MCF 10A (cell line): ENCODE measurements at regions of chr18 and their contacts with region 1.

Region 1: DNA sequence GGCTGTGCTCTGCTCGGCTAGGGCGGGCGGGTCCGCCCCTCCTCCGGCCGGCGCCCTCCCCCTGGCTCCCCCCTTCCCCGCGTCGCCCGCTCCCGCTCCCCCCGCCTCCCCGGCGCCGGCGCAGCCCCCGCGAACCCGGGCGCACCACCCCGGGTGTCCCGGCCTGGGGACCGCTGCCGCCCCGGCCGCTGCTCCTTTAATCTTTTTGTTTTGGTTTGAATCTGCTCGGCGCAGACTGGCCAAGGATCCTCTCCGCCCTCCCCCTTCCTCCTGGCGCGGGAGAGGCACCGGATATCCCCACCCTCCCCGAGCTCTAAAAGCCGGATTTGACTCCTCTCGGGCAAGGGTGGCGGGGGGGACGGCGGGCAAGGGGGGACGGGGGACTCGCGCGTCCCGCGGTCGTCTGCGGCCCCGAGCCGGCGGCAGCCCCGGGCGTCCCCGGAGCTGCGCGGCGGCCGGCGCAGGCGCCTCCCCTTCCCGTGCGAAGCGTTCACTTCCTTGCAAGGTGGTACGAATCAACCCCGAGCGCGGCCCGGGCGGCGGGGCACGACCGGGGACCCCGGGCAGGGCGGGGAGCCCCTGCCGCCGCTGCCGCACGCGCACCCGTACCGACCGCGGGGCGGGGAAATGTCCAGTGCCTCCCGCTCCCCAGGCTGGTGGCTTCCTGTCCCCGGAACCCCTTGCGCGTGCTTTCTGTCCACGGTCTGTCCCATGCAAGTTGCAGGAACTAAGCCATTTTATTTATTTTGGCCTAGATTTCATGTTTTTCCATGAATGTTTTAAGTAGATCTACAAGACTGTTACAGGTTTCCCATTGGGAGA is at the start of gene PTGR3:
- DNase-seq: peak; percentile 90
- H3K4me3 Mint-ChIP-seq: peak within 1 kb of the TSS; percentile 98
- H3K27ac Mint-ChIP-seq: peak within 1 kb of the TSS; percentile 92
- H3K4me1 Mint-ChIP-seq: peaks cover 40% of the 10 kb centered on the region
- H3K27me3 Mint-ChIP-seq: no peaks in the 10 kb centered on the region
- CTCF ChIP-seq: no peak
- total RNA-seq, gene PTGR3: 19.8 and 20.6 TPM in 2 replicates

Region 2: GRCh38 chr18:74652392-74652988 is 556.9 kb before region 1 on chr18:
- CTCF ChIA-PET with region 1: no interaction called
- POLR2A ChIA-PET with region 1: no interaction called
- intact Hi-C with region 1: loop called (anchors 1 kb)
- DNase-seq: peak; percentile 54
- H3K4me3 Mint-ChIP-seq: no peak overlapping the region
- H3K27ac Mint-ChIP-seq: no peak overlapping the region
- H3K4me1 Mint-ChIP-seq: no peaks in the 10 kb centered on the region
- H3K27me3 Mint-ChIP-seq: no peaks in the 10 kb centered on the region
- CTCF ChIP-seq: peak; percentile 38

Region 3: DNA sequence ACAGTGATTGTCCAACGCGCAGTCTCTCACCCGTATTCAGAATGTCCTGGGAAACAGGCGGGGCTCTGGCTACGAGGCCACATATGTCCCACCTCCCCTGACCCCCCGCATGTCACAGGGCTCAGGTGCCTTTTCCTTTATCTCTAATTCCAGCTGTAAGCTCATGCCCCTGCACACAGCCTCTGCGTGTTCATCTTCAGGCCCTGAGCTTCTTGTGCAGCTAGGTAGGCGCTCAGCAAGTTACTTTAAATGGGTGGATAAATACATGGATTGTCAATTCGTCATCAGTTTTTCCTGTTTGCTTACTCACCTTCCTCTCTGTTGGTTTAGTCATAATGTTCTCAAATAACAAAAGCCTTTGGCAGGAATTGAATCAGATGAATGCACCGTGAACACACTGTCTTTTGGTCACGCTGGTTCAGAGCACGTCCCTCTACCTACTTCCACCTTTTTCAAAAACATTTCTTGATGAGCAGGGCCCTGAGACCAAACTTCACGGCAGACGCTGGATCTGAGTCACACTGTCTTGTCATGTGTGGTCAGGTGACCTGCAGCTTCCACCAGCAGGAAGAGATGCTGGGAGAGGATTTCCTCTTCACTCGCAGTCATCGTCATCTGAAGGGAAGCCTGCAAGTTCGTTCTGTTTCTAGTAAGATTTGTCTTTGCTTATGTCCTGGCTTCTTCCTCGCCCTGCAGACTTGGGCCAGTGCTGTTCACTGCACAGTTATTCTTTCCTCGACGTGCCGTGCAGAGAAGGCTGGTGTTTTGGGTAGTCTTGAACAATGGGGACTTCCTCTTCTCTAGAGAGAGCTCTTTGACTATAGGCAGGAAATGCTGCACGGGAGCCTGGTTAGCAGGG is 138.5 kb before region 1 on chr18:
- CTCF ChIA-PET with region 1: no interaction called
- POLR2A ChIA-PET with region 1: interaction called, 4 read pairs
- intact Hi-C with region 1: loop called (anchors 5 kb)
- DNase-seq: peak; percentile 86
- H3K4me3 Mint-ChIP-seq: peak overlapping the region; percentile 59
- H3K27ac Mint-ChIP-seq: peak overlapping the region; percentile 93
- H3K4me1 Mint-ChIP-seq: peaks cover 11% of the 10 kb centered on the region
- H3K27me3 Mint-ChIP-seq: no peaks in the 10 kb centered on the region
- CTCF ChIP-seq: no peak

Region 4: GRCh38 chr18:75247611-75248421 is 38.5 kb after region 1 on chr18:
- CTCF ChIA-PET with region 1: interaction called, 6 read pairs
- POLR2A ChIA-PET with region 1: interaction called, 24 read pairs
- intact Hi-C with region 1: loop called (anchors 5 kb)
- DNase-seq: peak; percentile 50
- H3K4me3 Mint-ChIP-seq: peak overlapping the region; percentile 80
- H3K27ac Mint-ChIP-seq: peak overlapping the region; percentile 95
- H3K4me1 Mint-ChIP-seq: peaks cover 34% of the 10 kb centered on the region
- H3K27me3 Mint-ChIP-seq: no peaks in the 10 kb centered on the region
- CTCF ChIP-seq: no peak

Region 5: GRCh38 chr18:75478996-75479880 is 269.9 kb after region 1 on chr18:
- CTCF ChIA-PET with region 1: interaction called, 4 read pairs
- POLR2A ChIA-PET with region 1: interaction called, 12 read pairs
- intact Hi-C with region 1: loop called (anchors 2 kb)
- DNase-seq: peak; percentile 69
- H3K4me3 Mint-ChIP-seq: no peak overlapping the region
- H3K27ac Mint-ChIP-seq: no peak overlapping the region
- H3K4me1 Mint-ChIP-seq: peaks cover 16% of the 10 kb centered on the region
- H3K27me3 Mint-ChIP-seq: no peaks in the 10 kb centered on the region
- CTCF ChIP-seq: peak; percentile 57

Region 6: GRCh38 chr18:76131738-76132137 is 922.4 kb after region 1 on chr18:
- CTCF ChIA-PET with region 1: no interaction called
- POLR2A ChIA-PET with region 1: interaction called, 4 read pairs
- intact Hi-C with region 1: loop called (anchors 5 kb)
- DNase-seq: peak; percentile 98
- H3K4me3 Mint-ChIP-seq: peak overlapping the region; percentile 58
- H3K27ac Mint-ChIP-seq: peak overlapping the region; percentile 90
- H3K4me1 Mint-ChIP-seq: peaks cover 11% of the 10 kb centered on the region
- H3K27me3 Mint-ChIP-seq: no peaks in the 10 kb centered on the region
- CTCF ChIP-seq: no peak

Region 7: GRCh38 chr18:76349067-76349715 is 1139.9 kb after region 1 on chr18:
- CTCF ChIA-PET with region 1: interaction called, 3 read pairs
- POLR2A ChIA-PET with region 1: interaction called, 3 read pairs
- intact Hi-C with region 1: loop called (anchors 5 kb)
- DNase-seq: peak; percentile 85
- H3K4me3 Mint-ChIP-seq: peak overlapping the region; percentile 63
- H3K27ac Mint-ChIP-seq: peak overlapping the region; percentile 42
- H3K4me1 Mint-ChIP-seq: peaks cover 21% of the 10 kb centered on the region
- H3K27me3 Mint-ChIP-seq: no peaks in the 10 kb centered on the region
- CTCF ChIP-seq: peak; percentile 83